ENCODE measurements at regions of chr7 and their contacts with region 1.

Region 1: DNA sequence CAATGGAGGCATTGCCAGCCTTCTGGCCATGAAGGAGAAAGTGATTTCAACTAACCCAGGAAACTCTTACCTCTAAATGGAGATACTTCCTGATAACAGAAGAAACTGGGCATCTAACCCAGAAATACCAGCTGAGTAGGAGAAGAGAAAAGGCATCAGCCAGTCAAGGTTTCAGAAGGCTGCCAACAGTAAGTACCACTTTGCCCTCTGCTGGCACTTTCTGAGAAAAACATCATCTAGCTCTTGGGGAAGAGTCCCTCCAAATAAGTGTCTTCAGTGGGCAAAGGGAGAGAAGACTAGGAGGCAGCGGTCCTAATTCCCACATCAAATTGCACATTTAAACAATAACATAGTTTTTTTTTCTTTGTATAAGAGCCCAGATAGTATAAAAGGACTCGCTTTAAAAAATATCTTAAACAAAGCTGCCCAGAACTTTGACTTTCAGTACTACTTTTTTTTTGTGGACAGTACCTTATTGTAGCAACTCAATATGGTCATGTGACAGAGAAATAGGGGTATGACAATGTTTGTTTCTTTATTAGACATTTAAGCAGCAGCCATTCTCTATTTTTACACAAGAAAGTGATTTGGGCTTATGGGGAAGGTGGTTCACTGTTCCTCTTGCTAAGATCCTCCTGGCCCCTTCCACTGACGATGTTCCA is 157.3 kb downstream of the CTTNBP2 start:
- DNase-seq: no peak
- ATAC-seq: peak in 1 of 2 donors; percentile 44
- H3K4me3 ChIP-seq: no peak overlapping the region
- H3K27ac ChIP-seq: no peak overlapping the region
- H3K4me1 ChIP-seq: no peaks in the 10 kb centered on the region
- H3K27me3 ChIP-seq: no peaks in the 10 kb centered on the region

Region 2: DNA sequence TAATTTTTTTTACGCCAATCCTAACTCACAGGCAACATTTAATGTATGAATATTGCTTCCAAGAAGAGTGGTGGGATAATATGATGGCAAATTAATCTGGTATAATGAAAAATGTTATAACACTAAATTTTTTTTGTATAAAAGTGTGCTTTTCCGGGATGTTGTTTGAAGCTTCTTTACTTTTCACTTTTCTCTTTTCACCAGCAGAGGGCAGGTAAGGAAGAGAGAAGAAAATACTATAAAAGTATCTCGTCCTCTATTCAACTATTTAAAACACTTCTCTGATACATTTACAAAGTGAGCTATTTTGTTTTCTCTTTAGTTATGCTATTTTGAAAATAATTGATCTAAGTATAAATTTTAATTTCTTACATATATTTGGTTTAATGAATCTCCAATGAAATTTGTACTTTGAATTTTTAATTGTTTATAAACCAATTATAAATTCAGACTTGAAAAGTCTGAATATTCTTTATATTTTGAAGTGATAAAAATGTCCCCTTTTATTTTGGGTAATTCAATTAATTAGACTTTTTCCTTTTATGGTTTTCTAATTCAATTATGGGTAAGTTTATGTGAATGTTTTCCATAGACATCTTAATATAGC is 256.8 kb before region 1 on chr7:
- intact Hi-C with region 1: loop called (anchors 5 to 10 kb)
- DNase-seq: no peak
- ATAC-seq: no peak
- H3K4me3 ChIP-seq: no peak overlapping the region
- H3K27ac ChIP-seq: no peak overlapping the region
- H3K4me1 ChIP-seq: no peaks in the 10 kb centered on the region
- H3K27me3 ChIP-seq: no peaks in the 10 kb centered on the region

Region 3: GRCh38 chr7:117759950-117760640 is 44.2 kb after region 1 on chr7:
- intact Hi-C with region 1: no loop called
- DNase-seq: no peak
- ATAC-seq: no peak
- H3K4me3 ChIP-seq: no peak overlapping the region
- H3K27ac ChIP-seq: no peak overlapping the region
- H3K4me1 ChIP-seq: no peaks in the 10 kb centered on the region
- H3K27me3 ChIP-seq: no peaks in the 10 kb centered on the region

Region 4: GRCh38 chr7:117848941-117849340 is 133.0 kb after region 1 on chr7:
- intact Hi-C with region 1: no loop called
- DNase-seq: no peak
- ATAC-seq: no peak
- H3K4me3 ChIP-seq: no peak overlapping the region
- H3K27ac ChIP-seq: no peak overlapping the region
- H3K4me1 ChIP-seq: no peaks in the 10 kb centered on the region
- H3K27me3 ChIP-seq: no peaks in the 10 kb centered on the region

Region 5: GRCh38 chr7:118609207-118609606 is 893.3 kb after region 1 on chr7:
- intact Hi-C with region 1: no loop called
- DNase-seq: peak in 1 of 3 donors; percentile 16
- ATAC-seq: peak in 1 of 2 donors; percentile 25
- H3K4me3 ChIP-seq: no peak overlapping the region
- H3K27ac ChIP-seq: no peak overlapping the region
- H3K4me1 ChIP-seq: no peaks in the 10 kb centered on the region
- H3K27me3 ChIP-seq: no peaks in the 10 kb centered on the region